ENCODE measurements at regions of chr2 and their contacts with region 1.

Region 1: GRCh38 chr2:197137231-197137630 is 173.3 kb downstream of the ANKRD44 start:
- DNase-seq: peak; percentile 79
- H3K4me3 ChIP-seq: peak overlapping the region in 1 of 3 experiments; percentile 9
- H3K27ac ChIP-seq: peak overlapping the region; percentile 71
- H3K4me1 ChIP-seq: peaks cover 25% of the 10 kb centered on the region
- H3K27me3 ChIP-seq: no peaks in the 10 kb centered on the region
- CTCF ChIP-seq: no peak
- POLR2A ChIP-seq: no peak

Region 2: DNA sequence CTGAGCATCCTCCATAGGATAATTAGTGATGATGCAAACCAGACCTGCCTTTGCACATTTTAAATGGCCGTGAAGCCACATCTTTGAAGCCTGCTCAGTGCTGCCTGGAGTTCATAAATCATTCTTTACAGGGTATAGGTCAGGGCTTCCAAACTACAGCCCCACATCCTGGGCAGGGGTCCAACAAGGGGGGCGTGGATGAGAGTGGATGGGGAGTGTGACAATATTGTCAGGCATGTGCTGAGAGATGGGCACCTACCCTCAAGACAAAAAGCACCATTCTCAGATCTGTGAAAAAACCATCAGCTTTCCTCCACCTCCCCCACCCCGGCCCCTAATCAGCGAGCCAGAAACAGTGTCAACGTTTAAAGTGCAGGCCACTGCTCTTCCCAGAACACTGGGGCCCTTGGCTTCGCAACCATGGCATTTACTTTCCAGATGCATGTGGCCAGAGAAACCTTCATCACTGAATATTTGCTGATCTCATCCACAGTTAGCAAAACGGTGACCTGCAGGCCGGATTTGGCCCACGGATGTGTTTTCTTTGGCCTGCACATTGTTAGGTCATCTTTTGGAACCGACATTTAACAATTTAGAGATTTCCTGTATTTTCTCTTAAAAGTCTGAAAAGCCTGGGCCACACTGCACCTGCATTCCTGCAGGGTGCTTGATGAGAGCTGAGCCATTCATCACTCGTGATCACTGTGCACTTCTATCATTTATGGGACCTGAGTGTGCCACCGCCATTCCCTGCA is 42.7 kb after region 1 on chr2:
- CTCF ChIA-PET with region 1: interaction called, 6 read pairs
- POLR2A ChIA-PET with region 1: interaction called, 3 read pairs
- dilution Hi-C with region 1: no loop called
- intact Hi-C with region 1: loop called (anchors 1 kb)
- DNase-seq: peak; percentile 82
- H3K4me3 ChIP-seq: no peak overlapping the region
- H3K27ac ChIP-seq: peak overlapping the region; percentile 76
- H3K4me1 ChIP-seq: peaks cover 15% of the 10 kb centered on the region
- H3K27me3 ChIP-seq: no peaks in the 10 kb centered on the region
- CTCF ChIP-seq: no peak
- POLR2A ChIP-seq: no peak

Region 3: GRCh38 chr2:197216361-197216979 is 79.2 kb after region 1 on chr2:
- CTCF ChIA-PET with region 1: no interaction called
- POLR2A ChIA-PET with region 1: no interaction called
- dilution Hi-C with region 1: no loop called
- intact Hi-C with region 1: no loop called
- DNase-seq: peak; percentile 34
- H3K4me3 ChIP-seq: no peak overlapping the region
- H3K27ac ChIP-seq: no peak overlapping the region
- H3K4me1 ChIP-seq: peaks cover 15% of the 10 kb centered on the region
- H3K27me3 ChIP-seq: no peaks in the 10 kb centered on the region
- CTCF ChIP-seq: no peak
- POLR2A ChIP-seq: no peak

Measured in endothelial cell of umbilical vein (primary cell).